MCF 10A (cell line): ENCODE measurements at regions of chr10 and their contacts with region 1.

Region 1: DNA sequence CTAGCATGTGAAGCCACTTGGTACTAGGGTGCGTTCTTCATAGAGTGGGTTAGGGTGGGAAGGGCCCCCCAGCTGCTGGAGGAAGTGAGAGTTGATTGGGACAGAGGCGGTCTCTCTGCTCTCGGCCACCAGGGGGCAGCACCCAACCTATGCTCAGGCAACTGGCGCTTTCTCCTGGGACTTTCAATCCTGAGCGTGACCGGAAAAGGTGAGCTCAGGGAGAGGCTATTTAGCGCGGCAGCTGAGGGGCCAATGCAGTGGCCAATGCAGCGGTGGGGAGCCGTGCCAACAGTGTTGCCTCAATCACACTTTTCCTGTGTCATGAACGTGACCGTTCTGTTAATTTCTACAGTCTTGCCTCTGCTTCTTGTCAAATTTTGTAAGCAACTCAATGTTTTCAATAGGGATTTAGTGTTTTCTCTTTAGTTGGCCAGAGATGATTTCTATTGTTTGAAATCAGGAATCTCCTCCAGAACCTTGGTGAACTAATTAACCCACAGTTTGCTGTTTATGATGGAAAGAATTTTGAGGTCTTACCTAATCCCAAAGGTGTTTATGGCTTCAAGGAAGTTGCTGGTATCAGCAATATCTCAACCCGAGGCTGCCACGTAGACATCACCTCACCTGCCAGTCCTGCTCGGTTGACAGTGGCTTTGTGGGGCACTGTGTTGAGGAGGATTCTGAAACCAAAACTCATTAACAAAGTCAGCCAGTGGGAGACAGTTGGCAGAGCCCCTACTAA is 67.9 kb upstream of the PDZD8 start:
- DNase-seq: peak; percentile 97
- H3K4me3 Mint-ChIP-seq: peak overlapping the region; percentile 29
- H3K27ac Mint-ChIP-seq: no peak overlapping the region
- H3K4me1 Mint-ChIP-seq: peaks cover 29% of the 10 kb centered on the region
- H3K27me3 Mint-ChIP-seq: no peaks in the 10 kb centered on the region
- CTCF ChIP-seq: peak; percentile 86

Region 2: DNA sequence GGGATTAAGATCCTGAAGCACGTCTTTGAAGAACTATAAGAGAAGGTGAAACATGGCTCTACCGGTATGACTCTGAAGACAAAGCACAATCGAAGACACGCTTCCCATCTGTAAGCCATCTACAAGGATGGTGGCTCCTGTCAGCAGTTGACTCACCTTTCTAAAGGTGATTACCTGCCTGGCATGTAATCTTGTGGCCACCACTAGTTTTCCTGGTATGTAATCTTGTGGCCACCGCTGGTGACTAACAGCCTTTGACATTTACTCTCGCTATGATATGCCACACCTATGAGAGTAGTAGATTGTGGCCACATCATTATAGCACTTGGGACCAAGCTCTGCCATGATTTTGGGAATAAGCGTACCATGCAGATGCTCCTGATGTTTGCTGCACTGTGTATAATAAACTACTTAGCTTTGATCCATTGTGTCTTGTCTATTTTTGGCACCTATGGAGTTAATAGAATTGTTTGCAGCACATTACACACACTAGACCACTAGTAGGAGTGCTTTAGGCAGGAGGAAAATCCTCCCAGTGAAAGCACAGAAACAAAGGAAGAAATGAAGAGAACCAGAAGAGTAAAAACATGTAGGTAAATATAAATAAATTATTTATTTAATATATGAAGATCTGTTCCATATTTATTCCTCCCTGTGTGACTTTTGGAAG is 364.8 kb before region 1 on chr10:
- CTCF ChIA-PET with region 1: no interaction called
- POLR2A ChIA-PET with region 1: no interaction called
- intact Hi-C with region 1: no loop called
- DNase-seq: no peak
- H3K4me3 Mint-ChIP-seq: no peak overlapping the region
- H3K27ac Mint-ChIP-seq: no peak overlapping the region
- H3K4me1 Mint-ChIP-seq: peaks cover 8% of the 10 kb centered on the region
- H3K27me3 Mint-ChIP-seq: no peaks in the 10 kb centered on the region
- CTCF ChIP-seq: no peak

Region 3: GRCh38 chr10:117300671-117301070 is 142.4 kb before region 1 on chr10:
- CTCF ChIA-PET with region 1: no interaction called
- POLR2A ChIA-PET with region 1: no interaction called
- intact Hi-C with region 1: no loop called
- DNase-seq: no peak
- H3K4me3 Mint-ChIP-seq: no peak overlapping the region
- H3K27ac Mint-ChIP-seq: no peak overlapping the region
- H3K4me1 Mint-ChIP-seq: no peaks in the 10 kb centered on the region
- H3K27me3 Mint-ChIP-seq: no peaks in the 10 kb centered on the region
- CTCF ChIP-seq: no peak

Region 4: DNA sequence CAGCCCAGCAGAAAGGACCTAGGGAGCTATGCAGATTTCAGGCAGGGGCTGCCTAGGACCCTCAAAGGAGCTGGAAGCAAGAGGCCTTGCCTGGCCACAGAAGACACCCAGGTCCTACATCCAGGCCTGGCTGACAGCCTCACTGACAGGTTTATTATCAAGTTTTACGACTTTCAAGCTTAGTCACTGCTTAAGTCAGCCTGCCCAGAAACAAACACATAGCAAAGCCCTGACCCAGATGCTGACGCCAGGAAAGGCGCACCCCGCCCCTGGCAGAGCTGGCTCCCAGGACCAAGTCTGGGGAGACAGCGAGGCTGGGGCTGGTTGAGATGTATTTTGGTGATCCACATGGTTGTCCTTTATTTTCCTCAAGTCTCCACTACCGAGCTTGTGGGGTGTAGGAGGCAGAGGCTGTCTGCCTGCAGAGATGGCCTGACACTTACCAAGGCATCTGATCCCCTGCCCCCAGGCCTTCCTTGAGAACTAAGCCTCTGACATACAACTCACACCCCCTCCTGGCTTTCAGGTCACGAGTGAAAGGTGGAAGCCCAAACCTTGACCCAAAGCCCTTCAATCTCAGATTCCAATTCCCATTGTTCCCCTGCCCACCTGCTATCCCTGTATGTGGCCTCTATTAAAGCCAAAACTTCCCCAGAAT is 18.8 kb after region 1 on chr10:
- CTCF ChIA-PET with region 1: interaction called, 15 read pairs
- POLR2A ChIA-PET with region 1: interaction called, 20 read pairs
- intact Hi-C with region 1: loop called (anchors 1 kb)
- DNase-seq: peak; percentile 91
- H3K4me3 Mint-ChIP-seq: no peak overlapping the region
- H3K27ac Mint-ChIP-seq: peak overlapping the region; percentile 23
- H3K4me1 Mint-ChIP-seq: peaks cover 13% of the 10 kb centered on the region
- H3K27me3 Mint-ChIP-seq: no peaks in the 10 kb centered on the region
- CTCF ChIP-seq: no peak

Region 5: GRCh38 chr10:117472872-117473271 is 29.8 kb after region 1 on chr10:
- CTCF ChIA-PET with region 1: interaction called, 21 read pairs
- POLR2A ChIA-PET with region 1: interaction called, 20 read pairs
- intact Hi-C with region 1: loop called (anchors 1 kb)
- DNase-seq: no peak
- H3K4me3 Mint-ChIP-seq: no peak overlapping the region
- H3K27ac Mint-ChIP-seq: no peak overlapping the region
- H3K4me1 Mint-ChIP-seq: peaks cover 7% of the 10 kb centered on the region
- H3K27me3 Mint-ChIP-seq: peaks cover 13% of the 10 kb centered on the region
- CTCF ChIP-seq: no peak

Region 6: DNA sequence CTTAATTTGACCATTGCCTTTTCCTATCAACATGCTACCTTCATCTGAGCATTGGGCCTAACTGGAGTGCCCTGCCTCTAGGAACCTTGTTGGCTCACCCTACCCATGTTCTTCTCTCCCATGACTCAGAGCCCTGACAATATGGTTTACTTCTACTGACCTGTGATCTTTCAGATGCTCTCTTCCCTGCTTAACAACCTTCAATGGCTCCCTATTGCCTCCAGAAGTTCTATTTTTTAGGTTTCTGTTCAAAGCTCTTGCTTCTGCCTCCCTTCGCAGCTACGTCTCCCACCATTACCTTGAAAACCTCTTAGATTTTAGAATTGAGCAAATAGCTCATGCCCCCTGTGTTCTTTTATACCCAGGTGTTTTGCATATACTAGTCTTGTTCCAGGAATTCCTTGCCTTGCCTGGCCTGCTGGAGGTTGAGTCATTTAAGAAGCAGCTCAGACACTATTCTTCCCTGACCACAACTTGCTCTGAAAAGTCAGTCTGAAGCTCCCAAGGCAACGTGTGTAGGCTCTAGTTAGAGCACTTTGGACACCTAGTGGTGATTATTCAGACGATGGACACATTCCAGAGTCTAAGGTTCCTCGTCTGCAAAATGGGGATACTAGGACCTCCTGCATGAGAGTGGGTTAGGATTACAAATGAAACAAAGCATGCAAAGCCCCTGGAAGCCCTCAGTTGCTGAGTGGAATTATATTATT is 35.0 kb after region 1 on chr10:
- CTCF ChIA-PET with region 1: interaction called, 27 read pairs
- POLR2A ChIA-PET with region 1: interaction called, 20 read pairs
- intact Hi-C with region 1: loop called (anchors 1 kb)
- DNase-seq: peak; percentile 90
- H3K4me3 Mint-ChIP-seq: no peak overlapping the region
- H3K27ac Mint-ChIP-seq: peak overlapping the region; percentile 88
- H3K4me1 Mint-ChIP-seq: peaks cover 17% of the 10 kb centered on the region
- H3K27me3 Mint-ChIP-seq: no peaks in the 10 kb centered on the region
- CTCF ChIP-seq: peak; percentile 20

Region 7: GRCh38 chr10:117483056-117483604 is 40.0 kb after region 1 on chr10:
- CTCF ChIA-PET with region 1: interaction called, 27 read pairs
- POLR2A ChIA-PET with region 1: interaction called, 20 read pairs
- intact Hi-C with region 1: loop called (anchors 1 kb)
- DNase-seq: peak; percentile 17
- H3K4me3 Mint-ChIP-seq: no peak overlapping the region
- H3K27ac Mint-ChIP-seq: peak overlapping the region; percentile 33
- H3K4me1 Mint-ChIP-seq: peaks cover 20% of the 10 kb centered on the region
- H3K27me3 Mint-ChIP-seq: no peaks in the 10 kb centered on the region
- CTCF ChIP-seq: no peak

Region 8: GRCh38 chr10:117677890-117678500 is 234.9 kb after region 1 on chr10:
- CTCF ChIA-PET with region 1: no interaction called
- POLR2A ChIA-PET with region 1: no interaction called
- intact Hi-C with region 1: no loop called
- DNase-seq: peak; percentile 48
- H3K4me3 Mint-ChIP-seq: no peak overlapping the region
- H3K27ac Mint-ChIP-seq: no peak overlapping the region
- H3K4me1 Mint-ChIP-seq: peaks cover 27% of the 10 kb centered on the region
- H3K27me3 Mint-ChIP-seq: no peaks in the 10 kb centered on the region
- CTCF ChIP-seq: no peak